Right lobe of liver (tissue), 6 donors: ENCODE measurements at regions of chr18 and their contacts with region 1.

Region 1: GRCh38 chr18:49858309-49859020 is 45.1 kb upstream of the ACAA2 start:
- DNase-seq: peak in 2 of 3 donors; percentile 65 to 74
- ATAC-seq: peak; percentile 83 to 90 (median 86)
- H3K4me3 ChIP-seq: no peak overlapping the region
- H3K27ac ChIP-seq: peak overlapping the region in 2 of 3 donors; percentile 49 to 57
- H3K4me1 ChIP-seq: peaks cover 0 to 11% (median 2%) of the 10 kb centered on the region in 4 donors
- H3K27me3 ChIP-seq: no peaks in the 10 kb centered on the region
- CTCF ChIP-seq: peak in 3 of 4 donors; percentile 93 to 96 (median 95)
- POLR2A ChIP-seq: no peak

Region 2: GRCh38 chr18:49510393-49511115 is 347.9 kb before region 1 on chr18:
- intact Hi-C with region 1: loop called in 1 of 2 experiments (anchors 5 kb)
- DNase-seq: peak in 2 of 3 donors; percentile 44 to 59
- ATAC-seq: peak; percentile 77 to 83 (median 81)
- H3K4me3 ChIP-seq: no peak overlapping the region
- H3K27ac ChIP-seq: no peak overlapping the region
- H3K4me1 ChIP-seq: peaks cover 0 to 4% (median 0%) of the 10 kb centered on the region in 4 donors
- H3K27me3 ChIP-seq: no peaks in the 10 kb centered on the region
- CTCF ChIP-seq: peak; percentile 72 to 90 (median 86)
- POLR2A ChIP-seq: no peak

Region 3: GRCh38 chr18:49561289-49562193 is 296.9 kb before region 1 on chr18 and contains the start of gene LIPG:
- intact Hi-C with region 1: loop called in 1 of 2 experiments (anchors 10 kb)
- DNase-seq: peak; percentile 76 to 90 (median 84)
- ATAC-seq: peak; percentile 69 to 80 (median 76)
- H3K4me3 ChIP-seq: peak within 1 kb of the TSS; percentile 50 to 95 (median 86)
- H3K27ac ChIP-seq: peak within 1 kb of the TSS; percentile 64 to 74 (median 67)
- H3K4me1 ChIP-seq: peaks cover 0 to 35% (median 8%) of the 10 kb centered on the region in 4 donors
- H3K27me3 ChIP-seq: no peaks in the 10 kb centered on the region
- CTCF ChIP-seq: peak in 1 of 4 donors; percentile 2
- POLR2A ChIP-seq: peak; percentile 95
- total RNA-seq, gene LIPG: 35.0 to 120 (median 59.1) TPM

Region 4: DNA sequence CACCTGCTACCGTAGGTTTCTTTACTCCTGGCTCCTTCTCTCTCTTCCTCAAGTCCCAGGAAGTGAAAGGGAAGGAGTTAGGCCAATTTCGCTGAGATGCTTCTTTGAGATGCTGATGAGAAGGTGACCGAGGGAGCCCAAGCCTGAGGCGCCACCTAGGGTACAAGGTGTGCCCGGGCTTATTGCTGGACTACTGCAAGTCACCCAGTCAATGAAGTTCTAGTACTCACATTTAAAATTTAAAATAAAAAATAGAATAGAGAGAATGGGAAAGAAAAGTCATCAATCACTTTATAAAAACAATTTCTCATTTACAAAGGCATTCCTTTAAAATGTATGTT is 90.4 kb before region 1 on chr18:
- intact Hi-C with region 1: loop called in 1 of 2 experiments (anchors 10 kb)
- DNase-seq: peak in 2 of 3 donors; percentile 52 to 68
- ATAC-seq: peak; percentile 77 to 82 (median 78)
- H3K4me3 ChIP-seq: no peak overlapping the region
- H3K27ac ChIP-seq: no peak overlapping the region
- H3K4me1 ChIP-seq: peaks cover 0 to 11% (median 5%) of the 10 kb centered on the region in 4 donors
- H3K27me3 ChIP-seq: no peaks in the 10 kb centered on the region
- CTCF ChIP-seq: peak; percentile 52 to 65 (median 60)
- POLR2A ChIP-seq: no peak